ENCODE measurements at regions of chr2 and their contacts with region 1.

Region 1: GRCh38 chr2:121513597-121514333 is 16.9 kb upstream of the RNU4ATAC start:
- DNase-seq: no peak
- H3K4me3 ChIP-seq: no peak overlapping the region
- H3K27ac ChIP-seq: no peak overlapping the region
- H3K4me1 ChIP-seq: no peaks in the 10 kb centered on the region
- CTCF ChIP-seq: no peak

Region 2: DNA sequence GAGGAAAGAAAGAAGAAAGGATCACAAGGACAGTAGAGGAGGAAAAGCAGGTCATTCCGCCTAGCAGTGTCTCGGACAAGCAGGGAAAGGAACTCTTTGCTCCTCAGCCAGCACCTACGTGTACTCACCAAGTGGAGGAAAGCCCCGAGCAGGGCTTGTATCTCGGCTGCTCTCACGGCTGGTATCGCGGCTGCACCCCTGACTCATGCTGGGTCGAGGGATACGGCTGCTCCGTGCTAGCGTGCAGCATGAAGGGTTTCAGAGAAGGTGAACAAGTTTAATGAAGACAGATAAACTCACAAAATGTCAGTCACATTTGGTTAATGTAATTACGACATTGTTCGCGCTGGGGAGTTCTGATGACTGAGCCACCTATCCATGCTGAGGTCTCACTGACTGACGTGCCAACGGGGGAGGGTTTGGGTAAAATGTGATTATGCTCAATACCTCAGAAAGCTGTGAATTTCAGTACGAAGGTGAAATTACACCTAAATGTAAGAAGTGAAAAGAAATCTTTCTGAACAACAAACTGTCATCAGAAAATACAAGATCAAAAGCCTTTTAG is 95.2 kb before region 1 on chr2:
- CTCF ChIA-PET with region 1: no interaction called
- POLR2A ChIA-PET with region 1: no interaction called
- intact Hi-C with region 1: loop called (anchors 5 kb)
- DNase-seq: no peak
- H3K4me3 ChIP-seq: no peak overlapping the region
- H3K27ac ChIP-seq: no peak overlapping the region
- H3K4me1 ChIP-seq: no peaks in the 10 kb centered on the region
- CTCF ChIP-seq: no peak

Region 3: DNA sequence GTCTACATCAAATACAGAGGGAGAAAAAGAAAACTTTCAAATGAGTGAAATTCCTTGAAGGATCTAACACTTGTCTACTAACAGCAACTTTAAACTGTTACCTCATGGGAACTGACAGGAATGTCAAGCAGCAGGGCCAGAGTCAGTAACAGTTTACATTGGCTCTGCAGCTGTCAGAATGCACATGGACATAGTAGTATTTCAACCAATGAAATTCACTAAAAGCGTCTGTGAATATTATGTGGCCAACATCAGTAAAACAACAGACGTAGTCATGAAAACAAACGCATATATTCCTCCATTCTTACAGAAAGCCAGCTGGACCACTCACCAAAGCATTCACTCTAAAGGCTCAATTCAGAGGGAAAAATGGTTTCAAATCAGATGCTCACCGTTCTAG is 62.4 kb before region 1 on chr2:
- CTCF ChIA-PET with region 1: no interaction called
- POLR2A ChIA-PET with region 1: no interaction called
- intact Hi-C with region 1: no loop called
- DNase-seq: no peak
- H3K4me3 ChIP-seq: no peak overlapping the region
- H3K27ac ChIP-seq: no peak overlapping the region
- H3K4me1 ChIP-seq: no peaks in the 10 kb centered on the region
- CTCF ChIP-seq: no peak